Dorsolateral prefrontal cortex (tissue), 120 donors: ENCODE measurements at regions of chr11 and their contacts with region 1.

Region 1: GRCh38 chr11:128552783-128553661 is 34.3 kb downstream of the ETS1 start:
- DNase-seq: peak in 8 of 10 donors; percentile 62 to 79 (median 73)
- H3K4me3 ChIP-seq: peak overlapping the region in 51 of 59 donors; percentile 1 to 58 (median 27)
- H3K27ac ChIP-seq: peak overlapping the region in 34 of 59 donors; percentile 4 to 75 (median 39)
- H3K27me3 ChIP-seq: peaks cover 0 to 5% (median 0%) of the 10 kb centered on the region in 45 donors
- CTCF ChIP-seq: peak in 27 of 56 donors; percentile 6 to 46 (median 22)

Region 2: DNA sequence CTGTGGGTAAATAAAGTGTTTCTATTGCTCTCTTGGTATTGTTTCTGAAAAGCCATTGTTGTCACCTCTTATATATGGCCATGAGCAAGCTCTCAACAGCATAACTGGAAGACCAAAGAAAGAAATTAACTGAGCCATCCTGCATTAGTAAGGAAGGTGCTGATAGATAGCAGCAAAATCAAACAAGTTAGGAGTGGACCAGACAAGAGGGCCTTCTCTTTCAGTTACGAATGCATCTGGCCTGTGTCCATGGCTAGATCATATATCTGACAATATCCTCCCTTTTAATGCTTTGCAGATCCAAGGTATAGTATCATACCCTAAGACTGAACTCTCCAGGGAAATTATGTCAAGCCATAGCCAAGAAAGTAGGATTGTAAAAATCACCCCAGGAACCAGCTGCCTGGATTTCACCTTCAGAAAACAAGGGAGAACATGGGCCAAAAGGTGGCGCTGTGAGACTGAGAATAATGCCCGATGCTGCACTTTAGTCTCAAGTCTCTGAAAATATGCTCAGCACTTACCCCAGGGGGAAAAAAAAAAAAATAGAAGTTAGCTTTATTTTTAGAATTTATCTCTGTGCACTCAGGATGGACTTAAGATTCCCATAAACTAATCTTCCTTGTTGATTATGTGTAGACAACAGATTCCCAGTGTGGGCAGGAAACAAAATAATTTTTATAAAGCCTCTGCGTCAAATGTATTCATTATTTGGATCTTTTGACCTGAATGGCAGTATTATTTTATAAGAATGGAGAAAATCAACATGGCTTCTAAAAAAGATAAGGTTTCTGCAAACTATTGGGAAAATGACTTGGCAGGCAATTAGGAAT is 380.8 kb before region 1 on chr11:
- intact Hi-C with region 1: loop called in 1 of 2 experiments (anchors 10 kb)
- DNase-seq: peak; percentile 59 to 89 (median 78)
- H3K4me3 ChIP-seq: no peak overlapping the region
- H3K27ac ChIP-seq: no peak overlapping the region
- H3K27me3 ChIP-seq: peaks cover 0 to 40% (median 2%) of the 10 kb centered on the region in 45 donors
- CTCF ChIP-seq: peak; percentile 74 to 99 (median 86)

Region 3: DNA sequence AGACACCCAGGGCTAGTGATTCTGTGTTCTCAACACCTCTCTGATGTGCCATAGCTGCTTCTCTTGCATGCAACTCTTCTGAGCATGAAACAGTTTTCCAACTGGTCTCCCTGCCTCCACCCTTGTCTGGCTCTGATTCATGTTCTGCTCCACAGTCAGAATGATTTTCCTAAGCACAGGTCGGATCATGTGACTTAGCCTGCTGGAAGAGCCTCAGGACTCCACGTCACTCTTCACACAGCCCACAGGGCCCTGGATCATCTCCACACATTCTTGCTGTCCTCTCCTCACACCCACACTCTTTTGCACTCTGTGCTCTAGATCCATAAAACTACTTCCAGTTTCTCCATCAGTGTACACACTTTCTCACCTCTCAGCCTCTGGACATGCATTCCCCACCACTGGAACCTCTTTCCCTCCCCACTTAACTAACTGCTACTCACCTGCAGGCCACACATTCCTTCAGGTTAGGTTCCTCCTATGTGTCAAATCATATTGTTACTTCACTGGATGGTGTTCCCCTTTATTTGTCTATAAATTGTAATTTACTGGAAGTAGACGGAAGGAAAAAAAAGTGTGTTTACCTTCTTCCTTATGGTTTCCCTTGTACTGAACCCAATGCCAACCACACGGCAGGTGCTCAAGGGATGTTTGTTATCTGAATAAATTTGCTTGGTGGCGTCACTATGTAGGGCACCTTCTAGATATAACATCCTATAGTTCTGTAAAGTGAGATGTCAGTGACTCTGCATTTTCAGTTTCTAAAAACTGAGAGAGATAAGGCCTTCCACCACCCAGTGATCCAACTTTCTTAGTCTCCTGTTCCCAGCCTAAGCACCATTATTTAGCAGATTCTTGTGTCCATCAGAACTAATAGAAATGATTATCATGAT is 99.3 kb before region 1 on chr11:
- intact Hi-C with region 1: loop called in 1 of 2 experiments (anchors 10 kb)
- DNase-seq: peak in 9 of 10 donors; percentile 6 to 82 (median 63)
- H3K4me3 ChIP-seq: no peak overlapping the region
- H3K27ac ChIP-seq: peak overlapping the region in 34 of 59 donors; percentile 2 to 88 (median 59)
- H3K27me3 ChIP-seq: no peaks in the 10 kb centered on the region
- CTCF ChIP-seq: no peak

Region 4: DNA sequence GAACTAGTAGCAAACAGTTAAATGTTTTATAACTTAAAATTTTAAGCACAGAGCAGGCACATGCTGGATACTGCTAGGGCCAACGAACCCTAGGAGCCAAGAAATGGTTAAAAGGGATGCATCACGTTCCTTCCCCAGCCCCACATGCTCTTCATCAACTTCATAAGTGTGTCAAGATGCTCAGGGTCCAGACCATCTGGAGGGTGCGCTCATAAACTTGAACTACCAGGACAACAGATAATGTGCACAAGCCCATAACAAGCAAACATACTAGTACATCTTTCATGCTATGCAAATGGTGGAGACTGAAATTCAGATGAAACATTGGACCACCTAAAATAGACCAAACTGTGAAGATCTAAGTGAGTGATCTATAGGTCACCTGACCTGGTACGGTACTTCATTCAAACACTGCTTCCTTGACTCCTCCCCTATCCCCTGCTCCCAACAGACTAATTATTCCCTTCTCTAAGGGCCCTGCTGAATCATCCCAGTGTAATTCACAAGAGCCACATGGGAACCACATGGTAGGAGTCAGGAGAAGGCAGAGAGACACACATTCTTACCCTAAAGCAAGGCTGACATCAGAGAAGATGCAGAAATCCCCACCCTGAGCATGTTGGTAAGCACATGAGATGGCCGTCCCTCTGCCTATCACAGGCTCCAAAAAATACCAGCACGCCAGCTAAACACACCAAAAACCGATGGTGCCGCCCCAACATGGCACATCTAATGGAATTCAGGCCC is 49.6 kb before region 1 on chr11:
- intact Hi-C with region 1: loop called in 1 of 2 experiments (anchors 5 kb)
- DNase-seq: no peak
- H3K4me3 ChIP-seq: no peak overlapping the region
- H3K27ac ChIP-seq: peak overlapping the region in 5 of 59 donors; percentile 12 to 32 (median 28)
- H3K27me3 ChIP-seq: no peaks in the 10 kb centered on the region
- CTCF ChIP-seq: no peak

Region 5: DNA sequence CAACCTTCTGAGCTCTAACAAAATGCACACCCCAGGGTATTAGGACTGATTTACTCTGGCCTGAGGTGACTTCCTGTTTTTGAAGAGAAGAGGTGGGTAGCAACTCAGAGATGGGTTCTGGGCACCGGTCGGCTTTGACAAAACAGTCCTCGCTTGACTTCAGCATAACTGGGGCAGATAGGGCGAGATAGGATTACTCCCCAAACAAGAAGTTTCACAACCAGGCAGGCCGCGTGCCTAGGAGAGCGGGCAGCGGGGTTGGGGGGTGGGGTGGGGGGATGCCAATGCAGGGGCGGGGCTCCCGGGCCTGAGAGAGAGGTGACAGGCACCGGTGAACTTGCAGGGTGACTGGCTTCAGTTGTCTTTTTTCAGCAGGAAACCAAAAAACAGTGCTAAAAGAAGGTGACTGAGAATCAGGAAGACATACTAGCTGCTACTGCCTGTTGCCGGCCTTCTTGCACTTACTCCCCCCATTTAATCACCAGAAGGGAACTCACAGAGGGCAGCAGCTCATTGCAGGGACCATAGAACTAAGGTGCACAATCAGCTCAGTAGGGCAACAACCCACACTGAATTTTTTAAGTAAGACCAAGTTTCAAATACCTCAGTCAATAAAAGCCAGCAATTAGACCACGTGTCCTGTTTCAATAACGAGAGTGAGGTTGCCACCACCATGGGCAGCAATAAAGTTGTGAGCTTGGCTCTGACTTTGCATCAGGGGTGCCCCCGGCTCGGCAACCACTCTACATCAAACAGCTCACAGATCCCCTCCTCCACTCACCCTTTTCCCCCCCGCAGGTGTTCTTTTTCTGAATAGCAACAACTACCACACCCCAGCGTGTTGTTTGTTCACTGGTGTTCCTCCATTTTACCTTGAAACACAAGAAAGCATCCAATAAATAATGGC is 71.5 kb after region 1 on chr11:
- intact Hi-C with region 1: loop called in 1 of 2 experiments (anchors 5 kb)
- DNase-seq: no peak
- H3K4me3 ChIP-seq: no peak overlapping the region
- H3K27ac ChIP-seq: no peak overlapping the region
- H3K27me3 ChIP-seq: peaks cover 0 to 4% (median 0%) of the 10 kb centered on the region in 45 donors
- CTCF ChIP-seq: no peak

Region 6: GRCh38 chr11:128905345-128906184 is 352.5 kb after region 1 on chr11:
- intact Hi-C with region 1: no loop called
- DNase-seq: no peak
- H3K4me3 ChIP-seq: peak overlapping the region; percentile 19 to 72 (median 52)
- H3K27ac ChIP-seq: peak overlapping the region in 41 of 59 donors; percentile 2 to 76 (median 51)
- H3K27me3 ChIP-seq: peaks cover 0 to 45% (median 0%) of the 10 kb centered on the region in 45 donors
- CTCF ChIP-seq: peak in 25 of 56 donors; percentile 7 to 35 (median 20)